Panc1 (cell line): ENCODE measurements at regions of chr1 and their contacts with region 1.

Region 1: DNA sequence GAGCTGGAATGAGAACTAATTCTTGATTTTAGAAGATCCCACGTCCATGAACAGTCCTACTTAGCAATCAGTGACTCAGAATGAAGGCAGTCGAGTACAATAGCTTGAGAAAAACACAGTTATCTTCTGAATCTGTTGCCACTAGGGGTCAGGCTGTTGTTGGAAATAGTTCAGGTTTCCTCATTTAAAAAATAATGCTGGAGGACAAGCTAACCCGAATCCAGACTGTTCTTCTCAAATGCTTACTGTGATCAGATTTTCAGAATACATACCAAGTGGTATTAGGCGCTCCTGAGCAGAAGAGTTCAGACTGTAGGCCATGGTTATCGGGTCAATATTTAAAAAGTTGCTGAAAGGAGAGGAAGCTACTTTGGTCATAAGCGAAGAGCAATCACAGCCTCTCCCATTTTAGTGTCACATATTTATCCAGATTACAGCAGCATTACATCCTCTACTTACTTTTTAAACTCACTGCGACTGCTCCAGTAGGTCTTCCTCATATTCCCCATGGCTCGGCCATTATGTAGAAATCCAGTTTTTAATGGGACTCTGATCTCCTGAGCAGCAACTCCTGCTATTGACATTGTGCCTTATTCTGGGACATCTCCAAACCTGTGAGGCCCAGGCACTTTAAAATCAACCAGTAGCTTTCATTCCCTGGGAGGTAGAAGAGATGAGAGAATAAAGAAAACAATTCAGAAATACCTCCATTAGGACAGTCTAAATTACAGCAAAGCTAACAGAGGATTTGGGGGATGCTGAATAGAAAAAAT is 10.9 kb downstream of the ERRFI1 start:
- DNase-seq: no peak
- ATAC-seq: peak; percentile 9
- H3K4me3 ChIP-seq: peak overlapping the region; percentile 45 to 99
- H3K27ac ChIP-seq: peak overlapping the region; percentile 99
- H3K4me1 ChIP-seq: peaks cover 98% of the 10 kb centered on the region
- H3K27me3 ChIP-seq: no peaks in the 10 kb centered on the region
- CTCF ChIP-seq: peak; percentile 56

Region 2: GRCh38 chr1:7026169-7026568 is 989.1 kb before region 1 on chr1:
- CTCF ChIA-PET with region 1: no interaction called
- POLR2A ChIA-PET with region 1: interaction called, 12 read pairs
- in situ Hi-C with region 1: no loop called
- intact Hi-C with region 1: no loop called
- DNase-seq: no peak
- ATAC-seq: no peak
- H3K4me3 ChIP-seq: no peak overlapping the region
- H3K27ac ChIP-seq: no peak overlapping the region
- H3K4me1 ChIP-seq: no peaks in the 10 kb centered on the region
- H3K27me3 ChIP-seq: peaks cover 5% of the 10 kb centered on the region; the same call in 1 of the 2 replicates
- CTCF ChIP-seq: no peak

Region 3: DNA sequence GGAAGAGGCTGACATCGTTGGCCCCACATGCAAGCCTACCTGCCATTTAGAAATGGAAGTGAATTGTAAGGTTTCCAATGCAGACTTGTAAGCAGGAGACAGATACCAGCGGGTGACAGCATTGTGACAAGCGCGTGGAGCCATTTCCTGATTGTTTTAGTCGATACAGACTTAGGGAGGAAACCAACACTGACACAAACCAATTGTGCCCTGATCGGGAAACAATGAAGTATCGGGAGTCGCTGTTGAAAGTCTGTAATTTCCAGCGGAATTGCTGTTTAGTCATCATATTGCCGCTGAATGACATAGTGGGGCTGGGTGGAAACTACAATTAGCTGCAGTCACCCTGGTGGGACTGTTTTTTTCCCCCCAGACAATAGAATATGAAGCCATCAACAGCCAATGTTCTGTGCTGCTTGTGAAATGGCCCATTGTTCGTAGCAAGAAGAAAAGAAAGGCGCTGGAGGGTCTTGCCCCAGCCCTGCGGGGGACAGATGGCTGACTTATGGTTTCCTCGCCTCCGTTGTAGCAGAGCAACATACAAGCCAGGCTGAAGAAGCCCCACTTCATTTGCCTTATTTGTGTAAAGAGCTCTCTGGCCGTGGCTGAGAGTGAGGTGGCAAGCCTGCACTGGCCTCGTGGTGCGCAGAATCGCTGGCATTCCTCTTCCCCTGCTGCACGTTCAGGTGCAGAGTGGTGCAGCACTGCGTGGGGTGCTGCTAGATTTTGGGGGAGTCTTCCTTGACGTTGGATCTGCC is 767.3 kb before region 1 on chr1:
- CTCF ChIA-PET with region 1: no interaction called
- POLR2A ChIA-PET with region 1: no interaction called
- in situ Hi-C with region 1: no loop called
- intact Hi-C with region 1: no loop called
- DNase-seq: no peak
- ATAC-seq: no peak
- H3K4me3 ChIP-seq: no peak overlapping the region
- H3K27ac ChIP-seq: no peak overlapping the region
- H3K4me1 ChIP-seq: no peaks in the 10 kb centered on the region
- H3K27me3 ChIP-seq: no peaks in the 10 kb centered on the region
- CTCF ChIP-seq: no peak

Region 4: DNA sequence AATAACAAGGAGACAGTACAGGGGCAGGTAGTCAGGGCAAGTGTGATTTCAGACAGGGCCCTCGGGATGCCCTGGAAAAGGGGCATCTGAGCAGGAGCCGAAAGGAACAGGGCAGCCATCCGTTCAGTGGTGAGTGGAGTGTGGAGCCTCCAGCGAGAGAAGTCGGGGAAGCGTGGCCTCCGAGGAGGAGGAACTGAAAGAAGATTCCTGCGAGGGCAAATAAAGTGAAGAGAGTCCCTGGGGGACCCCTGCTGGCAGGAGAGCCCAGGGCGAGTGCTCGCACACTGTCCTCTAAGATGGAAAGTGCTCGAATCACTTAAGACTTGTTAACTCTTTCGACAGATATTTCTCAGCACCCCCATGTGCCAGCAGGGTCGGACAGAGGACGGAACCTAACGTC is 158.9 kb before region 1 on chr1:
- CTCF ChIA-PET with region 1: no interaction called
- POLR2A ChIA-PET with region 1: no interaction called
- in situ Hi-C with region 1: no loop called
- intact Hi-C with region 1: no loop called
- DNase-seq: no peak
- ATAC-seq: peak; percentile 51; the same call in 1 of the 2 replicates
- H3K4me3 ChIP-seq: no peak overlapping the region
- H3K27ac ChIP-seq: no peak overlapping the region
- H3K4me1 ChIP-seq: no peaks in the 10 kb centered on the region
- H3K27me3 ChIP-seq: no peaks in the 10 kb centered on the region
- CTCF ChIP-seq: no peak

Region 5: GRCh38 chr1:7983086-7983778 is 32.0 kb before region 1 on chr1:
- CTCF ChIA-PET with region 1: interaction called, 11 read pairs
- POLR2A ChIA-PET with region 1: no interaction called
- in situ Hi-C with region 1: no loop called
- intact Hi-C with region 1: no loop called
- DNase-seq: no peak
- ATAC-seq: no peak
- H3K4me3 ChIP-seq: no peak overlapping the region
- H3K27ac ChIP-seq: peak overlapping the region; percentile 93
- H3K4me1 ChIP-seq: peaks cover 26% of the 10 kb centered on the region
- H3K27me3 ChIP-seq: no peaks in the 10 kb centered on the region
- CTCF ChIP-seq: no peak

Region 6: GRCh38 chr1:8032366-8032910 is 17.2 kb after region 1 on chr1:
- CTCF ChIA-PET with region 1: no interaction called
- POLR2A ChIA-PET with region 1: interaction called, 11 read pairs
- in situ Hi-C with region 1: no loop called
- intact Hi-C with region 1: no loop called
- DNase-seq: no peak
- ATAC-seq: no peak
- H3K4me3 ChIP-seq: no peak overlapping the region
- H3K27ac ChIP-seq: peak overlapping the region; percentile 98
- H3K4me1 ChIP-seq: peaks cover 51% of the 10 kb centered on the region
- H3K27me3 ChIP-seq: no peaks in the 10 kb centered on the region
- CTCF ChIP-seq: no peak

Region 7: DNA sequence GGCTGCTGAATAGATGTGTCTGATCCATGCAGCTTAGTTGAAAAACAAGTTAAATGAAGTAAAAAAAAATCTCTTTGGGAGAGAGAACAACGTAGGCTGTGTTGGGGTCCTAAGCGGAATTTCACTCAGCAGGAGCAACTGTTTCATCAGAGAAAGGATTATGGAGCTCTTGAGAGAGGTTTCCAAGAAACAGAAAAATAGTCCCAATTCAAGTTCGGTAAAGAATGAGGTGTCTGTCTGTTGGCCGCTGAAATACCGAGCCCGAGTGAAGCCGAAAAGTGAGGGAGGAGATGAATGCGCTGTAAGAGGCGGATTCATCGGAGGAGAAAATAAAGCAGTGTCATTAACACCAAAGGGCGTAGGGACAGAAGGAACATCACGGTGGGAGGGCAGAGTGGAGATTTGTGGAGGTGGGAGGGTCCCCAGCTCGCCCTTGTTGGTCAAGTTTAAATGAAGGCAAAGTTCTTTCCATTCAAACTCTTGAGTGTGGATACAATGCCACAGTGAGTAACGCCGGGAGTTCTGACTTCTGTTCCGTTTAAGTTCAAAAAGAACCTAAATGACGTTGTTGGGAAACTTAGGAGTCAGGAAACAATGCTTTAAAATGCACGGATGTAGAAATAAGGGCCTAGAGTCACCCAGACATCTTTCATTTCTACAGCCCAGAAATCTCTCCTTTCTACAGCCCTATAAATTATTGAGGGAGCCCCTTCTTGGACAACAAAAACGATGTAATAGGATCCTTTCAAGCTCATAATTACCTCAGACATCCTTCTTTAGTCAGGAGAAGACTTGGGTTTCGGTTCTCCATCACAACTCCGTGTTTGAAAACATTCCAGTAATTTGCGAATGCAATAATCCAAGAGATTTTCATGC is 287.1 kb after region 1 on chr1:
- CTCF ChIA-PET with region 1: no interaction called
- POLR2A ChIA-PET with region 1: interaction called, 10 read pairs
- in situ Hi-C with region 1: no loop called
- intact Hi-C with region 1: no loop called
- DNase-seq: peak; percentile 74
- ATAC-seq: peak; percentile 72
- H3K4me3 ChIP-seq: peak overlapping the region in 1 of 2 experiments; percentile 8; a peak in 2 of 4 replicates
- H3K27ac ChIP-seq: peak overlapping the region; percentile 94
- H3K4me1 ChIP-seq: peaks cover 30% of the 10 kb centered on the region
- H3K27me3 ChIP-seq: no peaks in the 10 kb centered on the region
- CTCF ChIP-seq: no peak

Region 8: GRCh38 chr1:8351693-8352470 is 336.7 kb after region 1 on chr1:
- CTCF ChIA-PET with region 1: no interaction called
- POLR2A ChIA-PET with region 1: no interaction called
- in situ Hi-C with region 1: no loop called
- intact Hi-C with region 1: no loop called
- DNase-seq: no peak
- ATAC-seq: peak; percentile 18; the same call in 1 of the 2 replicates
- H3K4me3 ChIP-seq: no peak overlapping the region
- H3K27ac ChIP-seq: peak overlapping the region; percentile 2; the same call in 1 of the 2 replicates
- H3K4me1 ChIP-seq: peaks cover 14% of the 10 kb centered on the region
- H3K27me3 ChIP-seq: no peaks in the 10 kb centered on the region
- CTCF ChIP-seq: peak; percentile 86

Region 9: GRCh38 chr1:8482979-8483391 is 467.8 kb after region 1 on chr1:
- CTCF ChIA-PET with region 1: no interaction called
- POLR2A ChIA-PET with region 1: interaction called, 11 read pairs
- in situ Hi-C with region 1: no loop called
- intact Hi-C with region 1: no loop called
- DNase-seq: no peak
- ATAC-seq: no peak
- H3K4me3 ChIP-seq: no peak overlapping the region
- H3K27ac ChIP-seq: no peak overlapping the region
- H3K4me1 ChIP-seq: no peaks in the 10 kb centered on the region; the same call in 1 of the 2 replicates
- H3K27me3 ChIP-seq: no peaks in the 10 kb centered on the region
- CTCF ChIP-seq: no peak

Region 10: GRCh38 chr1:8915446-8915845 is 900.2 kb after region 1 on chr1:
- CTCF ChIA-PET with region 1: no interaction called
- POLR2A ChIA-PET with region 1: no interaction called
- in situ Hi-C with region 1: no loop called
- intact Hi-C with region 1: no loop called
- DNase-seq: no peak
- ATAC-seq: no peak
- H3K4me3 ChIP-seq: no peak overlapping the region
- H3K27ac ChIP-seq: peak overlapping the region; percentile 66
- H3K4me1 ChIP-seq: peaks cover 15% of the 10 kb centered on the region
- H3K27me3 ChIP-seq: no peaks in the 10 kb centered on the region
- CTCF ChIP-seq: no peak

Region 11: GRCh38 chr1:9121496-9122409 is 1106.5 kb after region 1 on chr1:
- CTCF ChIA-PET with region 1: no interaction called
- POLR2A ChIA-PET with region 1: interaction called, 16 read pairs
- in situ Hi-C with region 1: no loop called
- intact Hi-C with region 1: no loop called
- DNase-seq: no peak
- ATAC-seq: no peak
- H3K4me3 ChIP-seq: no peak overlapping the region
- H3K27ac ChIP-seq: no peak overlapping the region
- H3K4me1 ChIP-seq: peaks cover 12% of the 10 kb centered on the region
- H3K27me3 ChIP-seq: no peaks in the 10 kb centered on the region
- CTCF ChIP-seq: no peak